Naive thymus-derived CD4-positive, alpha-beta T cell (primary cell): ENCODE measurements at regions of chr19 and their contacts with region 1.

Region 1: DNA sequence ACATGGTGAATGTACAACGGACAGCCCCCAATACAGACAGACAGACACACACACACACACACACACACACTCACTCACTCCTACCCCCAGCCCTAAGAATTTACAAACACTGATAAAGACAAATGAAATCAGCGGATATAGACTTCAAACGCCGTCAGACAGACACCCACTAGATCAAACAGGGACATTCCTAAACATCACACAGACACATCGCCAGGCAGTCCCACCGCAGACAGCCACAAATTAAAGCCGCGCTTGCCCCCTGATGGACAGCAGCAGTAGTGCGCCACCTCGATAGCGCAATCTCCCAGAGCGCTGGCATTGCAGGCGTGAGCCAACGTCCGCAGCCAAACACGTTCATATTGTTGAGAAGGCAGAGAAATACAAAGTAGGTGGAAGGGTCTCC is 24.7 kb upstream of the ADGRE1 start:
- DNase-seq: peak; percentile 73 to 91 (median 88)
- ATAC-seq: peak; percentile 94
- H3K4me3 ChIP-seq: peak overlapping the region; percentile 12
- H3K4me3 Mint-ChIP-seq: peak overlapping the region; percentile 81 to 92 (median 86)
- H3K27ac ChIP-seq: peak overlapping the region; percentile 23
- H3K27ac Mint-ChIP-seq: peak overlapping the region; percentile 56 to 92 (median 82)
- H3K4me1 ChIP-seq: peaks cover 0 to 3% of the 10 kb centered on the region in 2 donors
- H3K4me1 Mint-ChIP-seq: peaks cover 17 to 39% (median 28%) of the 10 kb centered on the region in 7 donors
- H3K27me3 ChIP-seq: no peaks in the 10 kb centered on the region
- H3K27me3 Mint-ChIP-seq: no peaks in the 10 kb centered on the region

Region 2: GRCh38 chr19:6362027-6362350 is 500.7 kb before region 1 on chr19:
- CTCF ChIA-PET with region 1: no interaction called
- POLR2A ChIA-PET with region 1: no interaction called
- intact Hi-C with region 1: loop called in 1 of 2 experiments (anchors 5 kb)
- DNase-seq: no peak
- ATAC-seq: no peak
- H3K4me3 ChIP-seq: peak overlapping the region; percentile 76
- H3K4me3 Mint-ChIP-seq: peak overlapping the region; percentile 83 to 100 (median 97)
- H3K27ac ChIP-seq: peak overlapping the region; percentile 82
- H3K27ac Mint-ChIP-seq: peak overlapping the region; percentile 87 to 98 (median 96)
- H3K4me1 ChIP-seq: peaks cover 10 to 13% of the 10 kb centered on the region in 2 donors
- H3K4me1 Mint-ChIP-seq: peaks cover 10 to 37% (median 22%) of the 10 kb centered on the region in 7 donors
- H3K27me3 ChIP-seq: no peaks in the 10 kb centered on the region
- H3K27me3 Mint-ChIP-seq: no peaks in the 10 kb centered on the region

Region 3: GRCh38 chr19:6460101-6460853 is 402.4 kb before region 1 on chr19:
- CTCF ChIA-PET with region 1: no interaction called
- POLR2A ChIA-PET with region 1: interaction called, 3 read pairs
- intact Hi-C with region 1: loop called in 1 of 2 experiments (anchors 1 kb)
- DNase-seq: peak; percentile 87 to 97 (median 96)
- ATAC-seq: peak; percentile 90
- H3K4me3 ChIP-seq: peak overlapping the region; percentile 72
- H3K4me3 Mint-ChIP-seq: peak overlapping the region; percentile 92 to 99 (median 98)
- H3K27ac ChIP-seq: peak overlapping the region; percentile 83
- H3K27ac Mint-ChIP-seq: peak overlapping the region; percentile 83 to 96 (median 91)
- H3K4me1 ChIP-seq: peaks cover 0 to 4% of the 10 kb centered on the region in 2 donors
- H3K4me1 Mint-ChIP-seq: peaks cover 11 to 40% (median 34%) of the 10 kb centered on the region in 7 donors
- H3K27me3 ChIP-seq: no peaks in the 10 kb centered on the region
- H3K27me3 Mint-ChIP-seq: peaks cover 0 to 8% (median 0%) of the 10 kb centered on the region in 5 donors

Region 4: GRCh38 chr19:6590827-6591319 is 271.8 kb before region 1 on chr19 and contains the start of gene CD70:
- CTCF ChIA-PET with region 1: no interaction called
- POLR2A ChIA-PET with region 1: no interaction called
- intact Hi-C with region 1: no loop called
- DNase-seq: peak in 6 of 9 donors; percentile 10 to 68 (median 17)
- ATAC-seq: peak; percentile 74
- H3K4me3 ChIP-seq: peak within 1 kb of the TSS; percentile 56
- H3K4me3 Mint-ChIP-seq: peak within 1 kb of the TSS; percentile 58 to 93 (median 82)
- H3K27ac ChIP-seq: no peak within 1 kb of the TSS
- H3K27ac Mint-ChIP-seq: peak within 1 kb of the TSS in 2 of 9 donors; percentile 1 to 87
- H3K4me1 ChIP-seq: peaks cover 30 to 46% of the 10 kb centered on the region in 2 donors
- H3K4me1 Mint-ChIP-seq: peaks cover 40 to 61% (median 47%) of the 10 kb centered on the region in 7 donors
- H3K27me3 ChIP-seq: peaks cover 0 to 20% of the 10 kb centered on the region in 2 donors
- H3K27me3 Mint-ChIP-seq: peaks cover 46 to 71% (median 66%) of the 10 kb centered on the region in 5 donors
- total RNA-seq, gene CD70: 1.2 to 39.6 TPM in 2 of 5 experiments, not detected in the others

Region 5: DNA sequence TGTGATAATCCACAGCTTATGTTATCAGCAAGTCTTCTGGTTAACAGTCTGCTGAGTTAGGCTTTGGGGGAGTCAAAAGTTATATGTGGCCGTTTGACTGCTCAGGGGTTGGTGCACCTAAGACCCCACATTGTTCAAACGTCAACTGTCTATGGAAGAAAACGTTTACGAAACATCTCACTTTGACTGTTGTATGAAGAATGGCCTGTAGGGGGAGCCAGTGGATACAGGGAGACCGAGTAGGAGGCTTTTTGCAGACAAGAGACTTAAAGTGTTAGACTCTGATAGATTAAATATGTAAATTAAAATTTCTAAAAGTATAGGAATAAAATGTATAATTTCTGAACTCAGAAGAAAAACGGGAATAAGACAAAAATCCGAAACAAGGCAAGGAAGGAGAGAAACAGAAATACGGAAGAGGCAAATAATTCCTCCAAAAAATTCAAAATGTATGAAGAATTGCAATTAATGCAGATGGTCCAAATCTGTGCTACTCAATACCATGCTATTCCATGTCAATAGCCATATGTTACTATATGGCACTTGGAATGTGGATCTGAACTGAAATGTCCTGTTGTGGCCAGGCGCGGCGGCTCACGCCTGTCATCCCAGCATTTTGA is 230.6 kb before region 1 on chr19:
- CTCF ChIA-PET with region 1: interaction called, 20 read pairs
- POLR2A ChIA-PET with region 1: interaction called, 3 read pairs
- intact Hi-C with region 1: loop called (anchors 1 kb)
- DNase-seq: peak; percentile 29 to 88 (median 78)
- ATAC-seq: peak; percentile 90
- H3K4me3 ChIP-seq: no peak overlapping the region
- H3K4me3 Mint-ChIP-seq: no peak overlapping the region
- H3K27ac ChIP-seq: no peak overlapping the region
- H3K27ac Mint-ChIP-seq: peak overlapping the region in 3 of 9 donors; percentile 7 to 20 (median 13)
- H3K4me1 ChIP-seq: peaks cover 0 to 5% of the 10 kb centered on the region in 2 donors
- H3K4me1 Mint-ChIP-seq: peaks cover 4 to 20% (median 9%) of the 10 kb centered on the region in 7 donors
- H3K27me3 ChIP-seq: no peaks in the 10 kb centered on the region
- H3K27me3 Mint-ChIP-seq: peaks cover 4 to 7% (median 5%) of the 10 kb centered on the region in 5 donors

Region 6: DNA sequence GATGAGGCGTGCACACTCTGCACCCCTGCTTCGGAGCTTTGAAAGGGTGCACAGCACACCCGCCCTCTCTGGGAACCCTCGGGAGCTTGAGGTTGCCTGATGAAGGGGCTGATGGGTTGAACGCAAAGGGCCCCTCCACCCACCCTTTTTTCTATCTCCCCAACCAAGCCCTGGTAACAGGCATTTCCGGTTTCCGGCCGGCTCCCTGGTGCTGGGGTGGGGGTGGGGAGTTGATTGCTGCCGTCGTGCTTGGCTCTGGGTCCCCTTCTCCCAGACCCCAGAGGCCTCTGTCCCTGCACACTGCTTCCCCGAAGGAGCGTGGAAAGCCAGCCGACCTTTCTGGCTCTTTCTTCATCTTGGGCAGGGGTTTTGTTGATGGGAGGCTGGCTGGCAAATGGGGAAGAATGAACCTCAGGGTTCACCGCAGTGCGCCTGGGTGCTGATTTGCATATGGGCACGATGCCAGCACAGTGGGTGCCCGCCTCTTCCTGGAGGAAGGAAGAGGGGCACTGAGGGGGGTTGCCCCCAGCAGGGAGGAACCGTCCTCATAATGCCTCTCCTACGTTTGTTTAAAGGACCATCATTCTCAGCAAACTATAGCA is 61.1 kb before region 1 on chr19:
- CTCF ChIA-PET with region 1: no interaction called
- POLR2A ChIA-PET with region 1: no interaction called
- intact Hi-C with region 1: loop called (anchors 1 to 2 kb)
- DNase-seq: peak; percentile 58 to 90 (median 85)
- ATAC-seq: peak; percentile 78
- H3K4me3 ChIP-seq: peak overlapping the region; percentile 67
- H3K4me3 Mint-ChIP-seq: peak overlapping the region; percentile 87 to 99 (median 94)
- H3K27ac ChIP-seq: peak overlapping the region; percentile 85
- H3K27ac Mint-ChIP-seq: peak overlapping the region; percentile 93 to 99 (median 97)
- H3K4me1 ChIP-seq: peaks cover 28 to 35% of the 10 kb centered on the region in 2 donors
- H3K4me1 Mint-ChIP-seq: peaks cover 46 to 85% (median 68%) of the 10 kb centered on the region in 7 donors
- H3K27me3 ChIP-seq: no peaks in the 10 kb centered on the region
- H3K27me3 Mint-ChIP-seq: no peaks in the 10 kb centered on the region

Region 7: DNA sequence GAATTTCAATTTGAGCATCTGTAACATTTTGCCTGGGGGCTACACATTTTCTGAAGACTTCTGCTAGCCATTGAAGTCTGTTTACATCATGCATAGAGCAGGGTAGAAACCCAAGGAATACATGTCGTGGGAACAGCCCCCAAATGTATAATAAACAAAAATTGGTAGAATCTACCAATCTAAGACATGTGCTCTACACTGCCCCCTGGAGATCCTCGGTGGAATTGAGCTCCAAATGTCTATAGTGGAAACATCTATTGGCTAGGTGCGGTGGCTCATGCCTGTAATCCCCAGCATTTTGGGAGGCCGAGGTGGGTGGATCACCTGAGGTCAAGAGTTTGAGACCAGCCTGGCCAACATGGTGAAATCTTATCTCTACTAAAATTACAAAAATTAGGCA is 101.3 kb after region 1 on chr19:
- CTCF ChIA-PET with region 1: no interaction called
- POLR2A ChIA-PET with region 1: interaction called, 3 read pairs
- intact Hi-C with region 1: loop called in 1 of 2 experiments (anchors 1 kb)
- DNase-seq: peak in 6 of 9 donors; percentile 22 to 38 (median 29)
- ATAC-seq: peak; percentile 62
- H3K4me3 ChIP-seq: no peak overlapping the region
- H3K4me3 Mint-ChIP-seq: no peak overlapping the region
- H3K27ac ChIP-seq: no peak overlapping the region
- H3K27ac Mint-ChIP-seq: peak overlapping the region in 1 of 9 donors; percentile 63
- H3K4me1 ChIP-seq: no peaks in the 10 kb centered on the region
- H3K4me1 Mint-ChIP-seq: peaks cover 4 to 14% (median 6%) of the 10 kb centered on the region in 7 donors
- H3K27me3 ChIP-seq: no peaks in the 10 kb centered on the region
- H3K27me3 Mint-ChIP-seq: no peaks in the 10 kb centered on the region

Region 8: DNA sequence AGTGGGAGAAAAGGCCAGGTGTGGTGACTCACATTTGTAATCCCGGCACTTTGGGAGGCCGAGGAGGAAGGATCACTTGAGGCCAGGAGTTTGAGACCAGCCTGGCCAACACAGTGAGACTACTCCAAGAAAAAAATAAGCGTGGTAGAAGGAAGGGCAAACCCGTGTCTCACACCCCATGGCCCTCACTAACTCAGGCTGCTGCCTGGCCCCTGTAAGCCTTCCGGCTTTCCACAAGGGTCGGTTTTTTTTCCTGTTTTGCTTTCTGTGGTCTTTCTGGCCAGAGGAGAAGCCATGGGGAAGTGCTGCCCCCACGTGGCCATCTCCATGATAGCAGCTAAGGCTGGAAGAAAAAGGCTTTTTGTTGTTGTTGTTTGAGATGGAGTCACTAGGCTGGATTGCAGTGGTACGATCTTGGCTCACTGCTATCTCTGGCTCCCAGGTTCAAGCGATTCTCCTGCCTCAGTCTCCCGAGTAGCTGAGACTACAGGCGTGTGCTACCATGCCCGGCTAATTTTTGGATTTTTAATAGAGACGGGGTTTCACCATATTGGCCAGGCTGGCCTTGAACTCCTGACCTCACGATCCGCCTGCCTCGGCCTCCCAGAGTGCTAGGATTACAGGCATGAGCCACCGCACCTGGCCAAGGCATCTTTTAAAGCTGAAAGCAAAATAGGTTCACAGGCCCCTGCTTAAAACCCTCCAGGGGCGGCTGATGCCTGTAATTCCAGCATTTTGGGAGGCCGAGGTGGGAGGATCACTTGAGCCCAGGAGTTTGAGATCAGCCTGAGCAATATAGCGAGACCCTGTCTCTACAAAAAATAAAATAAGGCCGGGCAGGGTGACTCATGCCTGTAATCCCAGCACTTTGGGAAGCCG is 478.5 kb after region 1 on chr19:
- CTCF ChIA-PET with region 1: no interaction called
- POLR2A ChIA-PET with region 1: no interaction called
- intact Hi-C with region 1: loop called in 1 of 2 experiments (anchors 1 kb)
- DNase-seq: peak; percentile 65 to 91 (median 77)
- ATAC-seq: peak; percentile 60
- H3K4me3 ChIP-seq: no peak overlapping the region
- H3K4me3 Mint-ChIP-seq: peak overlapping the region in 7 of 10 donors; percentile 11 to 74 (median 39)
- H3K27ac ChIP-seq: no peak overlapping the region
- H3K27ac Mint-ChIP-seq: peak overlapping the region; percentile 14 to 95 (median 86)
- H3K4me1 ChIP-seq: peaks cover 37 to 39% of the 10 kb centered on the region in 2 donors
- H3K4me1 Mint-ChIP-seq: peaks cover 29 to 64% (median 59%) of the 10 kb centered on the region in 7 donors
- H3K27me3 ChIP-seq: no peaks in the 10 kb centered on the region
- H3K27me3 Mint-ChIP-seq: peaks cover 0 to 12% (median 0%) of the 10 kb centered on the region in 5 donors